PC-9 (cell line): ENCODE measurements at regions of chr2 and their contacts with region 1.

Region 1: DNA sequence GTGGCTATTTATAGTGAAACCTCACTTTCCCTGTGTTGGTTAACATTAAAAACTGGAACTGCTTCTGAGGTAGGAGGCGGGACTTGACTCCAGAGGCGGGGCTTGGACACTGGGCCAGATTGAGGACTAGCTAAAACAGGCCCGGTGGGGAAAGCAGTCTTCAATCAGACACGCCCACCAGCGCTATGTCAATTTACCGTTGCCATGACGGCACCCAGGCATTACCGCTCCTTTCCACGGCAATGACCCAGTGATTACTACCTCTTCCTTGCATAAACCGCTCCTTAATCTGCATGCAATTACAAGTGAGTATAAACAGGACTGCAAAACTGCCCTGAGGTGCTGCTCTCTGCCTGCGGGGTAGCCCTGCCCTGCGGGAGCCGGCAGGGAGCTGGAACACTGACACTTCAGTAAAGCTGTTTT is 35.3 kb downstream of the LRRFIP1 start:
- DNase-seq: peak; percentile 95 to 96
- H3K4me3 ChIP-seq: peak overlapping the region; percentile 9; the same call in 1 of the 2 replicates
- H3K27ac ChIP-seq: no peak overlapping the region
- H3K4me1 ChIP-seq: peaks cover 46% of the 10 kb centered on the region
- H3K27me3 ChIP-seq: no peaks in the 10 kb centered on the region
- CTCF ChIP-seq: no peak

Region 2: GRCh38 chr2:237616734-237617586 is 45.7 kb before region 1 on chr2:
- CTCF ChIA-PET with region 1: no interaction called
- POLR2A ChIA-PET with region 1: interaction called, 6 read pairs
- intact Hi-C with region 1: loop called (anchors 1 kb)
- DNase-seq: peak in 1 of 2 experiments; percentile 50
- H3K4me3 ChIP-seq: no peak overlapping the region
- H3K27ac ChIP-seq: no peak overlapping the region
- H3K4me1 ChIP-seq: peaks cover 19% of the 10 kb centered on the region
- H3K27me3 ChIP-seq: no peaks in the 10 kb centered on the region
- CTCF ChIP-seq: no peak

Region 3: DNA sequence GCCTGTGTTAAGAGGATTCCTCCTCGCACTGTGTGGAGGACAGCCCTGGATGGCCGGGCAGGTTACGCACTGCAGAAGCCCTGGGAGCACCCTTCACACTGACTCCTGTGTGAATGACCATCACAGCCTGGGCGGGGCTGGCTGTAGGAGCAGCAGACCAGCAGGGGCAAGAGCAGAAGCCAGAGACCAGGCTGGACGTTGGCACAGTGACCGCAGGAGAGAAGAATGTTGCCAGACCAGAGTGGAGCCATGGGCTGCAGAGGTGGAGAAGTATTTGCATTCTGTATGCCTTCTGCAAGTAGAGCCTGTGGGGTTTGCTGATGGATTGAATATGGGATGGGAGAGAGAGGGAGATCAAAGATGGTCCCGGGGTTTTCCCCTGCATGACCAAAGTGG is 12.2 kb before region 1 on chr2:
- CTCF ChIA-PET with region 1: no interaction called
- POLR2A ChIA-PET with region 1: no interaction called
- intact Hi-C with region 1: loop called (anchors 1 kb)
- DNase-seq: peak; percentile 96 to 97
- H3K4me3 ChIP-seq: no peak overlapping the region
- H3K27ac ChIP-seq: no peak overlapping the region
- H3K4me1 ChIP-seq: peaks cover 19% of the 10 kb centered on the region
- H3K27me3 ChIP-seq: no peaks in the 10 kb centered on the region
- CTCF ChIP-seq: no peak

Region 4: GRCh38 chr2:237731663-237732062 is 69.0 kb after region 1 on chr2:
- CTCF ChIA-PET with region 1: no interaction called
- POLR2A ChIA-PET with region 1: interaction called, 26 read pairs
- intact Hi-C with region 1: no loop called
- DNase-seq: peak; percentile 69 to 77
- H3K4me3 ChIP-seq: no peak overlapping the region
- H3K27ac ChIP-seq: peak overlapping the region; percentile 6; the same call in 1 of the 2 replicates
- H3K4me1 ChIP-seq: peaks cover 31% of the 10 kb centered on the region
- H3K27me3 ChIP-seq: no peaks in the 10 kb centered on the region
- CTCF ChIP-seq: no peak